ENCODE measurements at regions of chr5 and their contacts with region 1.

Region 1: GRCh38 chr5:94740286-94740685 is 121.8 kb downstream of the SLF1 start:
- DNase-seq: no peak
- H3K4me3 Mint-ChIP-seq: no peak overlapping the region
- H3K27ac Mint-ChIP-seq: no peak overlapping the region
- H3K4me1 Mint-ChIP-seq: no peaks in the 10 kb centered on the region
- H3K27me3 Mint-ChIP-seq: peaks cover 2% of the 10 kb centered on the region

Region 2: DNA sequence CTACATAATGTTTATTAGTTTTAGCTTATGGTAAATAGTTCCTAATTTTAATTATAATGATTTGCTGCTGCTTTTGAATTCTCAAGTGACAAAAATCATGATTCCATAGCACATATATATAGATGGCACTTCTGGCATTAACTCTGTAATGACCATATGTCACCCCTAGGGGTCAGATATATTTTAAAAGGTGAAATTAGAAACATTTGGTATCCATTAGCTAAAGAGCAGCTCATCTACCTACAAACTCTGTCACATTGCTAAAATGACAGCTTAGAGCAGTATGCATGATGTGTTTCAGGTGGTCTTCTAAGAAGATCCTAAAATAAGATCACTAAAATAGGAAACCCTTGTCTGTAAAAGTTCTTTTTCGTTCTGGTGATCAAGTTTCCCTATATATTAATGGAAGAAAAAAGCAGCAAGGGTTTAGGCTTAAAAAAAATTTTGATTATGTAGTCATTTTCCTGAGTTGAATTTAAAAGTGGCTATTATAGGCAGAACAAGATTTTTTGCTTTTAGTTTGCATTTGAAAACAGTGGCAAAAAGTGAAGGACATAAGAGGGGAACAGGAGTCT is 841.2 kb before region 1 on chr5:
- intact Hi-C with region 1: loop called (anchors 5 kb)
- DNase-seq: no peak
- H3K4me3 Mint-ChIP-seq: no peak overlapping the region
- H3K27ac Mint-ChIP-seq: no peak overlapping the region
- H3K4me1 Mint-ChIP-seq: no peaks in the 10 kb centered on the region
- H3K27me3 Mint-ChIP-seq: no peaks in the 10 kb centered on the region

Region 3: GRCh38 chr5:94524841-94525697 is 215.2 kb before region 1 on chr5:
- intact Hi-C with region 1: loop called (anchors 1 kb)
- DNase-seq: peak; percentile 22
- H3K4me3 Mint-ChIP-seq: no peak overlapping the region
- H3K27ac Mint-ChIP-seq: no peak overlapping the region
- H3K4me1 Mint-ChIP-seq: peaks cover 9% of the 10 kb centered on the region
- H3K27me3 Mint-ChIP-seq: no peaks in the 10 kb centered on the region

Region 4: GRCh38 chr5:94700592-94700991 is 39.7 kb before region 1 on chr5:
- intact Hi-C with region 1: loop called (anchors 2 kb)
- DNase-seq: no peak
- H3K4me3 Mint-ChIP-seq: no peak overlapping the region
- H3K27ac Mint-ChIP-seq: peak overlapping the region; percentile 61
- H3K4me1 Mint-ChIP-seq: peaks cover 15% of the 10 kb centered on the region
- H3K27me3 Mint-ChIP-seq: no peaks in the 10 kb centered on the region